ENCODE measurements at regions of chr17 and their contacts with region 1.

Region 1: GRCh38 chr17:47698749-47699535 is 5.0 kb downstream of the TBKBP1 start:
- DNase-seq: peak; percentile 98
- H3K4me3 ChIP-seq: no peak overlapping the region; a peak in 1 of 4 replicates
- H3K27ac ChIP-seq: no peak overlapping the region
- H3K4me1 ChIP-seq: peaks cover 5 to 10% of the 10 kb centered on the region in 2 experiments; a peak in 1 of 4 replicates
- H3K27me3 ChIP-seq: no peaks in the 10 kb centered on the region
- CTCF ChIP-seq: peak; percentile 100
- EP300 ChIP-seq: no peak
- RAD21 ChIP-seq: peak; percentile 78

Region 2: GRCh38 chr17:47733047-47733673 is 34.2 kb after region 1 on chr17 and contains the start of gene TBX21:
- CTCF ChIA-PET with region 1: interaction called, 211 read pairs
- POLR2A ChIA-PET with region 1: no interaction called
- DNase-seq: peak; percentile 93
- H3K4me3 ChIP-seq: peak within 1 kb of the TSS; percentile 25 to 31; a peak in 3 of 4 replicates
- H3K27ac ChIP-seq: no peak within 1 kb of the TSS
- H3K4me1 ChIP-seq: peaks cover 0 to 10% of the 10 kb centered on the region in 2 experiments; a peak in 1 of 4 replicates
- H3K27me3 ChIP-seq: peaks cover 87% of the 10 kb centered on the region
- CTCF ChIP-seq: peak; percentile 40
- EP300 ChIP-seq: no peak
- RAD21 ChIP-seq: 0 out of 2 replicates have a peak, but pooled peaks have one; percentile 16
- polyA plus RNA-seq, gene TBX21: not detected in 2 replicates

Region 3: GRCh38 chr17:47742319-47743181 is 43.6 kb after region 1 on chr17:
- CTCF ChIA-PET with region 1: interaction called, 211 read pairs
- POLR2A ChIA-PET with region 1: interaction called, 3 read pairs
- DNase-seq: peak; percentile 95
- H3K4me3 ChIP-seq: no peak overlapping the region; a peak in 1 of 4 replicates
- H3K27ac ChIP-seq: no peak overlapping the region
- H3K4me1 ChIP-seq: peaks cover 0 to 6% of the 10 kb centered on the region in 2 experiments; a peak in 1 of 4 replicates
- H3K27me3 ChIP-seq: peaks cover 86% of the 10 kb centered on the region
- CTCF ChIP-seq: peak; percentile 61
- EP300 ChIP-seq: no peak
- RAD21 ChIP-seq: peak; percentile 88

Region 4: GRCh38 chr17:48804925-48805411 is 1106.0 kb after region 1 on chr17:
- CTCF ChIA-PET with region 1: no interaction called
- POLR2A ChIA-PET with region 1: no interaction called
- DNase-seq: peak; percentile 88
- H3K4me3 ChIP-seq: peak overlapping the region in 1 of 2 experiments; percentile 15; a peak in 1 of 4 replicates
- H3K27ac ChIP-seq: no peak overlapping the region
- H3K4me1 ChIP-seq: peaks cover 0 to 18% of the 10 kb centered on the region in 2 experiments; a peak in 2 of 4 replicates
- H3K27me3 ChIP-seq: peaks cover 29% of the 10 kb centered on the region
- CTCF ChIP-seq: peak; percentile 99
- EP300 ChIP-seq: no peak
- RAD21 ChIP-seq: peak; percentile 95

Measured in SK-N-SH (cell line).